Ovary (tissue), 10 donors: ENCODE measurements at regions of chr12 and their contacts with region 1.

Region 1: GRCh38 chr12:15001733-15002382 is 29.0 kb downstream of the PDE6H start:
- DNase-seq: peak; percentile 52 to 80 (median 63)
- H3K4me3 ChIP-seq: peak overlapping the region; percentile 2
- H3K27ac ChIP-seq: no peak overlapping the region
- H3K4me1 ChIP-seq: peaks cover 3% of the 10 kb centered on the region
- H3K27me3 ChIP-seq: no peaks in the 10 kb centered on the region
- CTCF ChIP-seq: no peak
- EP300 ChIP-seq: no peak
- POLR2A ChIP-seq: no peak

Region 2: GRCh38 chr12:15151161-15152120 is 149.6 kb after region 1 on chr12:
- intact Hi-C with region 1: loop called in 1 of 4 experiments (anchors 10 kb)
- DNase-seq: peak in 1 of 5 donors; percentile 50
- H3K4me3 ChIP-seq: no peak overlapping the region
- H3K27ac ChIP-seq: peak overlapping the region; percentile 9 to 44
- H3K4me1 ChIP-seq: peaks cover 14% of the 10 kb centered on the region
- H3K27me3 ChIP-seq: no peaks in the 10 kb centered on the region
- CTCF ChIP-seq: peak; percentile 35 to 91 (median 78)
- EP300 ChIP-seq: no peak
- POLR2A ChIP-seq: no peak

Region 3: GRCh38 chr12:15205341-15206010 is 203.6 kb after region 1 on chr12:
- intact Hi-C with region 1: no loop called
- DNase-seq: no peak
- H3K4me3 ChIP-seq: no peak overlapping the region
- H3K27ac ChIP-seq: peak overlapping the region; percentile 39 to 50
- H3K4me1 ChIP-seq: peaks cover 2% of the 10 kb centered on the region
- H3K27me3 ChIP-seq: no peaks in the 10 kb centered on the region
- CTCF ChIP-seq: no peak
- EP300 ChIP-seq: no peak
- POLR2A ChIP-seq: no peak